Heart right ventricle (tissue), 16 donors: ENCODE measurements at regions of chr16 and their contacts with region 1.

Region 1: DNA sequence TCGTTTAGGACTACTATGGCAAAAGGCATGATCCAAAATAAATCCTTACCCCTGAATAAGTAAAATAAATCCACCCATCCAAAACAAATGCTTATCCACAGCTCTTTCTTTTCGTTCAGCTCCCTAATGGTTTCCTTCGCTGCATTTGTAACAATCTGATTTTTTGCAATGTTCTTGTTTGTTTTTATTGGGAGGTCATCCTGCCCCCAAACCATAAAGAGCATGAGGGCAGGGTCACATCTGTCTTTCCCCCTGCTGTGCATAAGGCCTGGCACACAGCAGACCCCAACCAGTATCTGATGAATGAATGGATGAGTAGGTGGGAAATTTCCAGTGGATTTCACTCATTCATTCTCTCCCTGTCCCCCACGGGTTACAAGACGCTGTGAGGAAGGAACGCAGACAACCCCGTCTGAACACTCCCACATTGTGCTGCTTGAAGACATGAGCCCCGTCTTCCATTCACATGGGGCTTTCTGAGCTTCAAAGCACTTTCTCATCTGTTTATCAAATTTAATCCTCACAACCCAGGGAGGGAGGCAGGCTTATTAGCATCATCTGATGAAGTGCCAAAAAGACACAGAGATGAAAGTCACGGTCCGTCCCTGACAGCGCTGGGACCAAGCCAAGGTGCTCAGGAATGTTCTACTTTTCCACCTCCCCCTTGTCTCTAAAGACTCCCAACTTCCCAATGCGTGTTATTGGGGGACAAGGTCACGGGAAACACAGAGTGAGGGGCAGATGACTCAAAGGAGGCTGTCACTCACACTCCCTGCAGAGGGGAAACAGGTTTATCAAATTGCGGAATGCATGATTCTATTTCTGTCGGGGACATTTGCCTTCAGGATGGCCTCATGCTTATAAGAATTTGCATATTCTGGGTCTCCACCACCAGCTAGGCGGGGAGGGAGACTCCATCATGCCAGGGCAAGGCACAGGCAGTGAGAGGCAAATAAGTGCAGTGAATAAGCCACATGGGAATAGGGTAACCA is 10.9 kb downstream of the XYLT1 start:
- DNase-seq: no peak
- ATAC-seq: peak in 4 of 8 donors; percentile 28 to 73 (median 46)
- H3K4me3 ChIP-seq: peak overlapping the region in 1 of 10 donors; percentile 4
- H3K27ac ChIP-seq: no peak overlapping the region
- H3K4me1 ChIP-seq: peaks cover 0 to 15% (median 6%) of the 10 kb centered on the region in 9 donors
- H3K27me3 ChIP-seq: peaks cover 0 to 8% (median 3%) of the 10 kb centered on the region in 7 donors
- CTCF ChIP-seq: no peak

Region 2: GRCh38 chr16:17070882-17071592 is 388.8 kb before region 1 on chr16:
- intact Hi-C with region 1: loop called in 1 of 10 experiments (anchors 10 kb)
- DNase-seq: no peak
- ATAC-seq: no peak
- H3K4me3 ChIP-seq: no peak overlapping the region
- H3K27ac ChIP-seq: no peak overlapping the region
- H3K4me1 ChIP-seq: no peaks in the 10 kb centered on the region
- H3K27me3 ChIP-seq: peaks cover 0 to 21% (median 4%) of the 10 kb centered on the region in 7 donors
- CTCF ChIP-seq: no peak

Region 3: DNA sequence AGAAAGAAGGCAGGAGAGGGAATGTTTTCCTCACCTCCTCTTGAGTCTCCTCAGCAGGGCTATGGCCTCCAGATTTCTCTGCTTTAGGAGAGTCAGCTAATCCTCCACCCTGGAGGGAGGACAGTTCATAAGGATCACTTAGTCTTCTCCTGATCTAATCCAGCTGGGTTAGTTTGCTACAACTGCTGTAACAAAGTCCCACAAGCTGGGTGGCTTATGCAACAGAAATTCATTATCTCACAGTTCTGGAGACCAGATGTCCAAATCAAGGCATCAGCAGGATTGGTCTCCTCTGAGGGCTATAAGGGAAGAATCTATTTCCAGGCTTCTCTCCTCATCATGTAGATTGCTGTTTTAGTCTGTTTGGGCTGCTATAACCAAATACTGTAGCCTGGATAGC is 51.5 kb after region 1 on chr16:
- intact Hi-C with region 1: loop called in 1 of 10 experiments (anchors 10 kb)
- DNase-seq: no peak
- ATAC-seq: peak in 4 of 8 donors; percentile 25 to 61 (median 48)
- H3K4me3 ChIP-seq: no peak overlapping the region
- H3K27ac ChIP-seq: no peak overlapping the region
- H3K4me1 ChIP-seq: no peaks in the 10 kb centered on the region
- H3K27me3 ChIP-seq: peaks cover 0 to 7% (median 4%) of the 10 kb centered on the region in 7 donors
- CTCF ChIP-seq: no peak